ENCODE measurements at regions of chr6 and their contacts with region 1.

Region 1: GRCh38 chr6:31541658-31542521 is at the start of gene DDX39B:
- DNase-seq: peak; percentile 95
- H3K4me3 Mint-ChIP-seq: peak within 1 kb of the TSS; percentile 93
- H3K27ac Mint-ChIP-seq: peak within 1 kb of the TSS; percentile 99
- H3K4me1 Mint-ChIP-seq: peaks cover 40% of the 10 kb centered on the region
- H3K27me3 Mint-ChIP-seq: no peaks in the 10 kb centered on the region
- total RNA-seq, gene DDX39B: 600 to 624 TPM

Region 2: GRCh38 chr6:31580807-31581433 is 39.0 kb after region 1 on chr6:
- CTCF ChIA-PET with region 1: interaction called, 442 read pairs
- intact Hi-C with region 1: loop called (anchors 1 kb)
- DNase-seq: peak; percentile 90
- H3K4me3 Mint-ChIP-seq: peak overlapping the region; percentile 99
- H3K27ac Mint-ChIP-seq: peak overlapping the region; percentile 99
- H3K4me1 Mint-ChIP-seq: peaks cover 50% of the 10 kb centered on the region
- H3K27me3 Mint-ChIP-seq: no peaks in the 10 kb centered on the region

Region 3: DNA sequence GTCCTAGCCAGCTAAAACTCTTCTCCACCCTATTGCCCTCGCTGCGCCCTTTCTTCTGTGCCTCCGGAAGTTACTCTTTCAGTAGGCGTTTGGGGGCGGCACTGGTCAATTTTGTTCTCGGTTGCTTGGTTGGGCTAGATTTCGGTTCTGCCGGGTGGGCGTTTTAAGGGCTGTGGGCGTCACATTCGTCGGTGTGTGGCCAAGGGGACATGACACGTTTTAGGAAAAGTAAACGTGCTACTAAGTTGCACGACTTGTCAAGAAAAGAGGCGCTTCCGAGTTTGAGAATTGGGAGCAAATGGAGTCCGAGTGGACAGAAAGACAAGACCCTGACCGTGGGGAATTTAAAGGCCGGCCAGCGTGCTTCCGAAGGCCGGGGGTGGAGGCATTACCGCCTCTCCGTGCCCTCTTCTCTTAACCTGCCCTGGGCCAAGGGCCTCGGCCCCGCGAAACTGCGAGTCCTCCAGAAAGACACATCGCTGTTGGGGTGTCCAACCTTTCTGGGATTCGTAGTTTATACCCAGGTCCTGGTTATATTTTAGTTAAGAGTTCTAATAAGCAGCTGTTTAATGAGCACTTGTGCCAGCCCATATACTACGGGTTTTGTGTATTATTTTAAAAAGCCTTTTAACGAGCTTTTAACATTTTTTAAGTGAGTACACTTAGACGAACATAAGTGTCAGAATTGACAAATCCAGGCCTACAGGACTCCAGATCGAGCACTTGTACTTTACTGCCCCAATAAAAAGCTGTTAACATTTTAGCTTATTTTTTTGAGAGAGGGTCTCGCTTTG is 111.2 kb after region 1 on chr6:
- CTCF ChIA-PET with region 1: interaction called, 5 read pairs
- intact Hi-C with region 1: loop called (anchors 1 kb)
- DNase-seq: peak; percentile 92
- H3K4me3 Mint-ChIP-seq: peak overlapping the region; percentile 96
- H3K27ac Mint-ChIP-seq: peak overlapping the region; percentile 98
- H3K4me1 Mint-ChIP-seq: peaks cover 44% of the 10 kb centered on the region
- H3K27me3 Mint-ChIP-seq: no peaks in the 10 kb centered on the region

Region 4: GRCh38 chr6:31888276-31889258 is 346.7 kb after region 1 on chr6:
- CTCF ChIA-PET with region 1: no interaction called
- intact Hi-C with region 1: no loop called
- DNase-seq: peak; percentile 53
- H3K4me3 Mint-ChIP-seq: no peak overlapping the region
- H3K27ac Mint-ChIP-seq: no peak overlapping the region
- H3K4me1 Mint-ChIP-seq: no peaks in the 10 kb centered on the region
- H3K27me3 Mint-ChIP-seq: no peaks in the 10 kb centered on the region

Region 5: DNA sequence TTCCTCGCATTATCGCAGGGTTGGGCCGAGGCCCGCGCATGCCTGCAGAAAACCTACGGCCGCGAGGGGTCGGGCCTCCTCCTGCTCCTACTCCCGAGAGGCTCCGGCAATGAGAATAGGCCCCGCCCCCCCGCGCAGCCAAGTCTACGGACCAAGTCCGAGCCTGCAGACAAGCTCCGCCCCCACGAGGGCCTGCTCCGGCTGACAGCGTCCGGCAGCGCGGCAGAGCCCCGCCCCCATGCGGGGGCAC is 653.7 kb after region 1 on chr6:
- CTCF ChIA-PET with region 1: no interaction called
- intact Hi-C with region 1: loop called (anchors 10 kb)
- DNase-seq: peak; percentile 100
- H3K4me3 Mint-ChIP-seq: peak overlapping the region; percentile 97
- H3K27ac Mint-ChIP-seq: peak overlapping the region; percentile 95
- H3K4me1 Mint-ChIP-seq: peaks cover 36% of the 10 kb centered on the region
- H3K27me3 Mint-ChIP-seq: no peaks in the 10 kb centered on the region

Measured in activated naive CD4-positive, alpha-beta T cell treated with anti-CD3 and anti-CD28 coated beads for 36 hours (primary cell).